WTC11 (cell line): ENCODE measurements at regions of chr14 and their contacts with region 1.

Region 1: GRCh38 chr14:39174560-39175444 is at the start of gene PNN:
- DNase-seq: peak; percentile 97
- ATAC-seq: peak; percentile 91
- H3K4me3 Mint-ChIP-seq: peak within 1 kb of the TSS; percentile 98
- H3K27ac Mint-ChIP-seq: peak within 1 kb of the TSS; percentile 100
- H3K4me1 Mint-ChIP-seq: peaks cover 36% of the 10 kb centered on the region
- H3K27me3 Mint-ChIP-seq: no peaks in the 10 kb centered on the region
- CTCF ChIP-seq: no peak
- total RNA-seq, gene PNN: 135 to 156 TPM (median 135 TPM) in 3 replicates

Region 2: GRCh38 chr14:38989922-38990546 is 184.8 kb before region 1 on chr14:
- CTCF ChIA-PET with region 1: no interaction called
- POLR2A ChIA-PET with region 1: no interaction called
- DNase-seq: no peak
- ATAC-seq: no peak
- H3K4me3 Mint-ChIP-seq: no peak overlapping the region
- H3K27ac Mint-ChIP-seq: no peak overlapping the region
- H3K4me1 Mint-ChIP-seq: no peaks in the 10 kb centered on the region
- H3K27me3 Mint-ChIP-seq: no peaks in the 10 kb centered on the region
- CTCF ChIP-seq: no peak

Region 3: GRCh38 chr14:39114073-39114838 is 60.5 kb before region 1 on chr14 and contains the start of gene GEMIN2:
- CTCF ChIA-PET with region 1: interaction called, 3 read pairs
- POLR2A ChIA-PET with region 1: interaction called, 19 read pairs
- DNase-seq: peak; percentile 89
- ATAC-seq: peak; percentile 96
- H3K4me3 Mint-ChIP-seq: peak within 1 kb of the TSS; percentile 95
- H3K27ac Mint-ChIP-seq: peak within 1 kb of the TSS; percentile 97
- H3K4me1 Mint-ChIP-seq: peaks cover 16% of the 10 kb centered on the region
- H3K27me3 Mint-ChIP-seq: no peaks in the 10 kb centered on the region
- CTCF ChIP-seq: no peak
- total RNA-seq, gene GEMIN2: 27.1 to 34.9 TPM (median 31.8 TPM) in 3 replicates